ENCODE measurements at regions of chr15 and their contacts with region 1.

Region 1: GRCh38 chr15:68285259-68285980 is 7.9 kb downstream of the FEM1B start:
- DNase-seq: no peak
- ATAC-seq: no peak
- H3K4me3 ChIP-seq: no peak overlapping the region
- H3K27ac ChIP-seq: no peak overlapping the region
- H3K4me1 ChIP-seq: no peaks in the 10 kb centered on the region
- H3K27me3 ChIP-seq: no peaks in the 10 kb centered on the region

Region 2: DNA sequence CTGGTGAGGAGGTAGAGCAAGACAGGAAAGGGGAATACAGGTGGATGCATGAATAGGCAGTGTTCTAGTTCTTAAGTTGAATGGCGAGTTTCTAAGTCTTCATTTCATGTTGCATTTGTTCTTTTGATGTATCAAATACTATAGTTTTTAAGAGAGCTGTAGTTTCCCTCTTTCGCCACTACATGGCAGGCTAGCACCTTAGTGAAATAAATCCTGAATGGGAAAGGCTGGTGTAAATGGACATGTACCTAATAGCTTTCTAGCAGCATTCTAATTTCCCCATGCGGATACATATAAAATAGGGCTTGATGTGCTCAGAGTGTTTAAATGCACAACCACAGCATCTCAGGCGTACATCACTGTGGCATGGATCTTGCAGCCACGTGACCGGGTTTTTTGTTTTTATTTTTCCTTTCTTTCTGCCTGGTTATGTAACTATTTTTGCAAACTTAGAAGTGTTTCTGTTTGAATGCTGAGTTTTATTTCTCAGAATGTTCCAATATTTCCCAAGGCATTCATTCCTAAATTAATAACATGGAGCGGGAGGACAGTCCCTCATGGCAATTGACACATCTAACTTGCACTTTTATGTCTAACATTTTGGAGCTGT is 32.4 kb before region 1 on chr15:
- intact Hi-C with region 1: loop called in 1 of 2 experiments (anchors 5 kb)
- DNase-seq: no peak
- ATAC-seq: peak; percentile 66
- H3K4me3 ChIP-seq: no peak overlapping the region
- H3K27ac ChIP-seq: no peak overlapping the region
- H3K4me1 ChIP-seq: no peaks in the 10 kb centered on the region
- H3K27me3 ChIP-seq: no peaks in the 10 kb centered on the region

Measured in aorta (tissue), 5 donors.